ENCODE measurements at regions of chr17 and their contacts with region 1.

Region 1: GRCh38 chr17:21524211-21524591 is 148.0 kb downstream of the KCNJ12 start:
- DNase-seq: peak in 2 of 4 experiments; percentile 47 to 54
- ATAC-seq: peak; percentile 91
- H3K4me3 ChIP-seq: no peak overlapping the region; the same call in 1 of the 2 replicates
- H3K27ac ChIP-seq: no peak overlapping the region
- H3K4me1 ChIP-seq: peaks cover 0 to 3% of the 10 kb centered on the region in 2 experiments; a peak in 2 of 5 replicates
- H3K27me3 ChIP-seq: peaks cover 0 to 6% of the 10 kb centered on the region in 2 experiments; a peak in 2 of 5 replicates
- CTCF ChIP-seq: no peak
- EP300 ChIP-seq: 0 out of 2 replicates have a peak, but pooled peaks have one; percentile 17
- POLR2A ChIP-seq: no peak
- RAD21 ChIP-seq: no peak

Region 2: GRCh38 chr17:21592774-21593173 is 68.6 kb after region 1 on chr17:
- CTCF ChIA-PET with region 1: no interaction called
- POLR2A ChIA-PET with region 1: no interaction called
- in situ Hi-C with region 1: no loop called
- intact Hi-C with region 1: loop called (anchors 10 kb)
- DNase-seq: no peak
- ATAC-seq: no peak; the same call in 2 of the 3 replicates
- H3K4me3 ChIP-seq: no peak overlapping the region
- H3K27ac ChIP-seq: no peak overlapping the region
- H3K4me1 ChIP-seq: peaks cover 0 to 9% of the 10 kb centered on the region in 2 experiments; a peak in 2 of 5 replicates
- H3K27me3 ChIP-seq: peaks cover 0 to 23% of the 10 kb centered on the region in 2 experiments; a peak in 3 of 5 replicates
- CTCF ChIP-seq: no peak
- EP300 ChIP-seq: no peak
- POLR2A ChIP-seq: no peak
- RAD21 ChIP-seq: no peak

Measured in K562 (cell line).